PC-9 (cell line): ENCODE measurements at regions of chr11 and their contacts with region 1.

Region 1: GRCh38 chr11:44398266-44399045 is 88.5 kb upstream of the ALX4 start:
- DNase-seq: peak in 1 of 2 experiments; percentile 3
- H3K4me3 ChIP-seq: no peak overlapping the region
- H3K27ac ChIP-seq: no peak overlapping the region
- H3K4me1 ChIP-seq: no peaks in the 10 kb centered on the region
- H3K27me3 ChIP-seq: peaks cover 40% of the 10 kb centered on the region
- CTCF ChIP-seq: no peak

Region 2: GRCh38 chr11:44133335-44133946 is 265.0 kb before region 1 on chr11:
- CTCF ChIA-PET with region 1: no interaction called
- POLR2A ChIA-PET with region 1: no interaction called
- intact Hi-C with region 1: no loop called
- DNase-seq: peak in 1 of 2 experiments; percentile 41
- H3K4me3 ChIP-seq: no peak overlapping the region
- H3K27ac ChIP-seq: no peak overlapping the region
- H3K4me1 ChIP-seq: no peaks in the 10 kb centered on the region
- H3K27me3 ChIP-seq: no peaks in the 10 kb centered on the region
- CTCF ChIP-seq: peak; percentile 89

Region 3: DNA sequence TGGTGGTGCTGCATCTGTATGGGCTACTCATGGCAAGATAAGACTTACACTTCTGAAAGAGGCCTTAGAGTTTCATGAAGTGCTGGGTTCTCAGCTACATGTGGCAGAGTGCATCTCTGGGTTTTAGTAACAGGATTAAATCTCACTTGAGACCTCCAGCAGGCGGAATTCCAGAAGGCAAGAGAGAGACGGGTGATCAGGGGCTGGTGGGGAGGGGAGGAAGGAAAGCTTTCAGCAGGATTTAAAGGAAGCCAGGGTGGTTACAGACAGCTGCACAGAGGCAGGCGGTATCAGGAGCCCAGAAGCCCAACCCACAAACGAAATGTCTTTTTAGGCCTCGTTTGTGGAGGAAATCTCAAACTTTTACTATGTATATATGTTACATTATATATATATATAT is 110.8 kb after region 1 on chr11:
- CTCF ChIA-PET with region 1: no interaction called
- POLR2A ChIA-PET with region 1: interaction called, 11 read pairs
- intact Hi-C with region 1: no loop called
- DNase-seq: no peak
- H3K4me3 ChIP-seq: no peak overlapping the region
- H3K27ac ChIP-seq: no peak overlapping the region
- H3K4me1 ChIP-seq: no peaks in the 10 kb centered on the region
- H3K27me3 ChIP-seq: peaks cover 52% of the 10 kb centered on the region
- CTCF ChIP-seq: no peak

Region 4: GRCh38 chr11:44556735-44557409 is 158.4 kb after region 1 on chr11:
- CTCF ChIA-PET with region 1: no interaction called
- POLR2A ChIA-PET with region 1: no interaction called
- intact Hi-C with region 1: no loop called
- DNase-seq: peak; percentile 47 to 58
- H3K4me3 ChIP-seq: no peak overlapping the region
- H3K27ac ChIP-seq: no peak overlapping the region
- H3K4me1 ChIP-seq: no peaks in the 10 kb centered on the region
- H3K27me3 ChIP-seq: no peaks in the 10 kb centered on the region
- CTCF ChIP-seq: peak; percentile 86